ENCODE measurements at regions of chr1 and their contacts with region 1.

Region 1: DNA sequence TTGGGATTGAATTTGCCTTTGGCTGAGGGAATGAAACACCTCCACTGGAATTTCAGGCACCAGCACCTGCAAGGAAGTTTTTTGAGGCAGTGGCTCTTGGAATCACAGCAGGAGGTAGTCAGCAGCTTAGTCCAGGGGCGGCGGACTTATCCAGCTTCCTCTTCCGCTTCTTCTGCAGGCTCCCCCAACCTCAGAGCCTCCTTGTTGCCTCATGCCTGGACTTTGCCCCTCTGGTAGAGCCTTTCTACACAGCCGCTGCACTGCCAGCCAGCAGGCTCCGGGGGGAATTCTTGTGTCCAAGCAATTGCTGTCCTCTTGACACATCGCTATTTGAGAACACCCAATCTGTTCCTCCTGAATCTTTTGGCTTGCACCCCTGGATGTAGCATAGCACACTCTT is 4.4 kb upstream of the RHEX start:
- DNase-seq: no peak
- H3K4me3 ChIP-seq: no peak overlapping the region
- H3K4me3 Mint-ChIP-seq: no peak overlapping the region
- H3K27ac ChIP-seq: no peak overlapping the region
- H3K27ac Mint-ChIP-seq: peak overlapping the region in 2 of 7 donors; percentile 3 to 8
- H3K4me1 ChIP-seq: peaks cover 26% of the 10 kb centered on the region
- H3K4me1 Mint-ChIP-seq: peaks cover 10 to 37% (median 20%) of the 10 kb centered on the region in 4 donors
- H3K27me3 ChIP-seq: no peaks in the 10 kb centered on the region
- H3K27me3 Mint-ChIP-seq: no peaks in the 10 kb centered on the region

Region 2: GRCh38 chr1:206030714-206031113 is 17.9 kb before region 1 on chr1:
- CTCF ChIA-PET with region 1: interaction called, 15 read pairs
- POLR2A ChIA-PET with region 1: no interaction called
- intact Hi-C with region 1: no loop called
- DNase-seq: peak; percentile 54 to 71 (median 65)
- H3K4me3 ChIP-seq: no peak overlapping the region
- H3K4me3 Mint-ChIP-seq: peak overlapping the region in 2 of 8 donors; percentile 9 to 46
- H3K27ac ChIP-seq: no peak overlapping the region
- H3K27ac Mint-ChIP-seq: peak overlapping the region in 2 of 7 donors; percentile 20 to 21
- H3K4me1 ChIP-seq: no peaks in the 10 kb centered on the region
- H3K4me1 Mint-ChIP-seq: peaks cover 0 to 12% (median 5%) of the 10 kb centered on the region in 4 donors
- H3K27me3 ChIP-seq: no peaks in the 10 kb centered on the region
- H3K27me3 Mint-ChIP-seq: peaks cover 3 to 8% of the 10 kb centered on the region in 2 donors